ENCODE measurements at regions of chr13 and their contacts with region 1.

Region 1: DNA sequence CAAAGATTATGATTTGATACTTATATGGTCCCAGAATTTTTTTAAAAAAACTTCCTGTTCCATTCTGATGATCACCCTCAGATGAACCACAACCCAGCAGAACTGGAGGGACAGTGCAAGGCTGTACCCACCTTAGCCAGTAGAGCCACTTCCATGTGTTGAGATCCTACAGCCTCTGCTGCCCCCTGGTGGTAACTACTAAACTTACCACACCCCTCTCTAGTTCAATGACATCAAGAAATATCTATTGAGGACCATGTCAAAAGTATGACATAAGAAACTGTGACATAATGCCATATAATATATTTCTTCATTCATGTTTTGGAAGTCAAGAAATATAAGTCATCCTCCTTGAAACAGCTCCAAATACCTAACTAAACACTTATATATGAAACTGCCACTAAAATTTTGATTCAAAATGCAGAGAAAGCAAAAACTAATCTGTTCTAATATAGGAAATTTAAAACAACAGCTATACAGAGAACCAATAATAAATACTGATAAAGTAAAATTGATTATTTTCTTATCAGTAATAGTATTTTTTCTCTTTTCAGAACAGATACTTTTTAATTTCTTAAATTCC is 412.6 kb downstream of the KCTD12 start:
- DNase-seq: peak; percentile 81 to 85
- H3K4me3 ChIP-seq: no peak overlapping the region
- H3K4me3 Mint-ChIP-seq: no peak overlapping the region
- H3K27ac Mint-ChIP-seq: peak overlapping the region; percentile 7
- H3K4me1 ChIP-seq: no peaks in the 10 kb centered on the region
- H3K4me1 Mint-ChIP-seq: no peaks in the 10 kb centered on the region
- H3K27me3 ChIP-seq: no peaks in the 10 kb centered on the region
- H3K27me3 Mint-ChIP-seq: no peaks in the 10 kb centered on the region
- CTCF ChIP-seq: peak; percentile 84 to 94

Region 2: DNA sequence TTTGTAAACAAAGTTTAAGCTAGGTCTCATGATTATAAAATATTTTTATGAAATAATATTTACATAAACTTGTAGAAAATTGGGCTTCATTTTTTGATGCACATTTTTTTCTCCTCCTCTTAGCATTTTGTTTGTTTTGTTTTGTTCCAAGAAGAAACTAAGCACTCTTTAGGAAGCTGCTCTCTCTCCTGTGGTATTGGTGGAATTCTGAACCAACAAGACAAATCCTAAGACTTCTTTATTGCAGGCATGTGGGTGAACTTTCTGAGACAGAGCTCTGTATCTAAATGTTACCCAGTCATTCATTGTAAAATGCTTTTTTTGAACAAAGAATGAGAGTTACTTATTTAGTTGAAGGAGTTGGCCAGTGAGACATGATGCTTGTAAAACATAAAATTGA is 798.2 kb before region 1 on chr13:
- CTCF ChIA-PET with region 1: no interaction called
- POLR2A ChIA-PET with region 1: no interaction called
- intact Hi-C with region 1: loop called (anchors 5 kb)
- DNase-seq: no peak
- H3K4me3 ChIP-seq: no peak overlapping the region
- H3K4me3 Mint-ChIP-seq: no peak overlapping the region
- H3K27ac Mint-ChIP-seq: no peak overlapping the region
- H3K4me1 ChIP-seq: no peaks in the 10 kb centered on the region
- H3K4me1 Mint-ChIP-seq: no peaks in the 10 kb centered on the region
- H3K27me3 ChIP-seq: no peaks in the 10 kb centered on the region
- H3K27me3 Mint-ChIP-seq: no peaks in the 10 kb centered on the region
- CTCF ChIP-seq: no peak

Region 3: DNA sequence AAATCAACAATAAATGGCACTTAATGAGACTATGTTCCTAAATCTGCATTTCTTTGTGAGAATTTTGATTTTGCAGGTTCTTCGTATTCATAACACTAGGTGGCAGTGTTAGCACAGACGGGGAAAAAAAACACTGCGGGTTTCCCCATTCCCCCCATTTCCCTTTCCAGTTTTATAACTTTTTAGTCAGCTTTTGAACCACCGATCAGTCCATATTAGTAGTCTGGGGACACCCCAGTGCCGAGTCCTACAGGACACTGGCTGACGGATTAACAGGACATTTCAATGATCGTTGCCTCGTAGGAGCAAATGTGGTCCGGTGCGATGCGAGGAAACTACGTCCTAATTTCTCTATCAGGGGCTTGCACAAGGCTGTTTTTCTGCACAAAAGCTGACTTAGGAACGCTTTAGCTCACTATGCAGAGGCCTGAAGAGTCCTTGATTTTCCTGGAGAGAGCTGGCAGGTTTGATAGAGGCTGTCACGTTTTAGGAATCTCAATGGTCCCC is 603.2 kb before region 1 on chr13:
- CTCF ChIA-PET with region 1: interaction called, 6 read pairs
- POLR2A ChIA-PET with region 1: no interaction called
- intact Hi-C with region 1: loop called (anchors 1 kb)
- DNase-seq: peak in 1 of 2 experiments; percentile 46
- H3K4me3 ChIP-seq: no peak overlapping the region
- H3K4me3 Mint-ChIP-seq: peak overlapping the region; percentile 36
- H3K27ac Mint-ChIP-seq: no peak overlapping the region
- H3K4me1 ChIP-seq: no peaks in the 10 kb centered on the region
- H3K4me1 Mint-ChIP-seq: peaks cover 13% of the 10 kb centered on the region
- H3K27me3 ChIP-seq: no peaks in the 10 kb centered on the region
- H3K27me3 Mint-ChIP-seq: no peaks in the 10 kb centered on the region
- CTCF ChIP-seq: peak; percentile 71 to 85

Region 4: DNA sequence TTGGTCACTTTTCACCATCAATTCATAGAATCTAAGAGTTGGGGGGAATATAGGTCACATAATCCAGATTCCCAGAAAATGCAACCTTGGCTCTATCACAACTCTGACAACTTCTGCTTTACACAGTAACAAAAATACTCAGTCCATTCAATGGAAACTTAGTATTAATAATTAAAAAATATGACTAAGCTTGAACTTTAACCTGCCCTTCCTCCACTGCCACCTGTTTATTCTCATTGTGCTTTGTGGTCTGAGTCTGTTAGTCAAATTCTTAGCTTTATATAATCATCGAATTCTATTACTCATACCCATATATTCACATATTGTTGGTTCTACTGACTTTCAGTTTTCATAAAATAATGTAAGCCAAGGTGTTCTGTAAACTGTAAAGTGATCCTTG is 464.2 kb before region 1 on chr13:
- CTCF ChIA-PET with region 1: no interaction called
- POLR2A ChIA-PET with region 1: no interaction called
- intact Hi-C with region 1: loop called (anchors 1 kb)
- DNase-seq: peak in 1 of 2 experiments; percentile 48
- H3K4me3 ChIP-seq: no peak overlapping the region
- H3K4me3 Mint-ChIP-seq: peak overlapping the region; percentile 61
- H3K27ac Mint-ChIP-seq: peak overlapping the region; percentile 95
- H3K4me1 ChIP-seq: peaks cover 95% of the 10 kb centered on the region
- H3K4me1 Mint-ChIP-seq: peaks cover 53% of the 10 kb centered on the region
- H3K27me3 ChIP-seq: no peaks in the 10 kb centered on the region
- H3K27me3 Mint-ChIP-seq: no peaks in the 10 kb centered on the region
- CTCF ChIP-seq: no peak

Region 5: GRCh38 chr13:76038920-76039716 is 434.5 kb before region 1 on chr13:
- CTCF ChIA-PET with region 1: no interaction called
- POLR2A ChIA-PET with region 1: no interaction called
- intact Hi-C with region 1: loop called (anchors 2 kb)
- DNase-seq: no peak
- H3K4me3 ChIP-seq: no peak overlapping the region
- H3K4me3 Mint-ChIP-seq: no peak overlapping the region
- H3K27ac Mint-ChIP-seq: no peak overlapping the region
- H3K4me1 ChIP-seq: peaks cover 16% of the 10 kb centered on the region
- H3K4me1 Mint-ChIP-seq: peaks cover 18% of the 10 kb centered on the region
- H3K27me3 ChIP-seq: no peaks in the 10 kb centered on the region
- H3K27me3 Mint-ChIP-seq: no peaks in the 10 kb centered on the region
- CTCF ChIP-seq: no peak

Region 6: DNA sequence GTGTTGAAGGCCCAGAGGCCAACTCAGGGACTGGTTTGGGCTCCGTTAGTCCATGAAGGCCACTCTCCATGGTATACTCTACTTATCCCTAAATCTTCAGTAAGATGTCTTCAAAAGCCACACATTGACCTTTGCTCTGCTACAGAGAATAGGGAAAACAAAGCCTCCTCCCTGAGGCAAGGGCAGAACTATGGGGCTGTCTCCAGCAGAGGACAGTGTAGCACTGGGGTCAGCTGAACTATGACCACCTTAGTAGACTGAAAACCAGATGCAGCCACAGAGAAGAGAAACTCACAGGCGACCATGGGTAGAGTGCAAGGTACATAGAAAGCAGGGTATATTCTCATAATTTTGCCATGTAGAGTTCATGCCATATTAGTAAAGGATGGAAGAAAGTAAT is 250.1 kb before region 1 on chr13:
- CTCF ChIA-PET with region 1: no interaction called
- POLR2A ChIA-PET with region 1: no interaction called
- intact Hi-C with region 1: loop called (anchors 1 kb)
- DNase-seq: peak in 1 of 2 experiments; percentile 45
- H3K4me3 ChIP-seq: no peak overlapping the region
- H3K4me3 Mint-ChIP-seq: no peak overlapping the region
- H3K27ac Mint-ChIP-seq: no peak overlapping the region
- H3K4me1 ChIP-seq: no peaks in the 10 kb centered on the region
- H3K4me1 Mint-ChIP-seq: no peaks in the 10 kb centered on the region
- H3K27me3 ChIP-seq: no peaks in the 10 kb centered on the region
- H3K27me3 Mint-ChIP-seq: no peaks in the 10 kb centered on the region
- CTCF ChIP-seq: peak; percentile 25 to 47

Region 7: GRCh38 chr13:76903544-76904162 is 430.0 kb after region 1 on chr13:
- CTCF ChIA-PET with region 1: no interaction called
- POLR2A ChIA-PET with region 1: no interaction called
- intact Hi-C with region 1: loop called (anchors 1 kb)
- DNase-seq: peak; percentile 72 to 80
- H3K4me3 ChIP-seq: no peak overlapping the region
- H3K4me3 Mint-ChIP-seq: no peak overlapping the region
- H3K27ac Mint-ChIP-seq: no peak overlapping the region
- H3K4me1 ChIP-seq: no peaks in the 10 kb centered on the region
- H3K4me1 Mint-ChIP-seq: no peaks in the 10 kb centered on the region
- H3K27me3 ChIP-seq: no peaks in the 10 kb centered on the region; the same call in 1 of the 2 replicates
- H3K27me3 Mint-ChIP-seq: peaks cover 15% of the 10 kb centered on the region
- CTCF ChIP-seq: peak; percentile 91 to 99